ENCODE measurements at regions of chr2 and their contacts with region 1.

Region 1: DNA sequence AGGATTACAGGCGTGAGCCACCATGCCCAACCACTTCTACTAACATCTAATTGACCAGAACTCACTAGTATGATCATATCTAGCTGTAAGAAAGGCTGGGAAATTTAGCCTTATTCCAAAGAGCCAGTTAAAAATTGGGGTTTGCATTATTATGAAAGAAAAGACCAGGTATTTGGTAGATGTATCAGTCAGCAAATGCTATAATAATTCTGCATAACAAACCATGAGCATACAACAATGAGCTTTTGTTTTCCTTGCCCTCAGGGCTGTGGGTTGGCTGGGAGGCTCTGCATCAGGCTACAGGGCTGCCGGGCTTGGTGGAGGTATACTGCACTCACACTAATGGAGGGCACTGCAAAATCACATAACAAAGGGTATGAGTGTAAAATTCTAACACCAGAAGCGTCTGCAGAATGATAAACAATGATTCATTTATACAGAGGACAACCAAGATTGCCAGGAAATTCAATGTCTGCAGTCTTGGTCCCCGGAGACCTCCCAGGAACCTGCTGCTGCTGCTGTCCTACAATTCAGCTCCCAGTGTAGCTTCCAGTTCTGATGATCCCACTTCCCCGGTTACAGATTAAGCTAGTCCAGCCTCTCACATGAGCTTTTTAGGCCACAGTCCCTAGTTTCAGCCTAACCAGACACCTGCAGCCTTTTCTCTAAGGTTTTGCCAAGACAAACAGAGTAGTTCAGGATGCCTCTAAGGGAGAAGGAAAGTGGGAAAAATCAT is 32.2 kb upstream of the ST3GAL5 start:
- DNase-seq: peak; percentile 40
- H3K4me3 Mint-ChIP-seq: no peak overlapping the region
- H3K27ac Mint-ChIP-seq: peak overlapping the region; percentile 74
- H3K4me1 Mint-ChIP-seq: peaks cover 34% of the 10 kb centered on the region
- H3K27me3 Mint-ChIP-seq: no peaks in the 10 kb centered on the region
- CTCF ChIP-seq: no peak

Region 2: GRCh38 chr2:85826990-85827878 is 93.7 kb before region 1 on chr2:
- CTCF ChIA-PET with region 1: interaction called, 11 read pairs
- POLR2A ChIA-PET with region 1: no interaction called
- intact Hi-C with region 1: no loop called
- DNase-seq: peak; percentile 74
- H3K4me3 Mint-ChIP-seq: no peak overlapping the region
- H3K27ac Mint-ChIP-seq: no peak overlapping the region
- H3K4me1 Mint-ChIP-seq: peaks cover 5% of the 10 kb centered on the region
- H3K27me3 Mint-ChIP-seq: peaks cover 7% of the 10 kb centered on the region
- CTCF ChIP-seq: peak; percentile 90

Measured in MCF 10A (cell line).